Cardiac septum (tissue), 1 donor: ENCODE measurements at regions of chr12 and their contacts with region 1.

Region 1: GRCh38 chr12:32794281-32794680 is 38.6 kb upstream of the YARS2 start:
- DNase-seq: no peak

Region 2: GRCh38 chr12:32603858-32604257 is 190.4 kb before region 1 on chr12:
- intact Hi-C with region 1: no loop called
- DNase-seq: no peak

Region 3: DNA sequence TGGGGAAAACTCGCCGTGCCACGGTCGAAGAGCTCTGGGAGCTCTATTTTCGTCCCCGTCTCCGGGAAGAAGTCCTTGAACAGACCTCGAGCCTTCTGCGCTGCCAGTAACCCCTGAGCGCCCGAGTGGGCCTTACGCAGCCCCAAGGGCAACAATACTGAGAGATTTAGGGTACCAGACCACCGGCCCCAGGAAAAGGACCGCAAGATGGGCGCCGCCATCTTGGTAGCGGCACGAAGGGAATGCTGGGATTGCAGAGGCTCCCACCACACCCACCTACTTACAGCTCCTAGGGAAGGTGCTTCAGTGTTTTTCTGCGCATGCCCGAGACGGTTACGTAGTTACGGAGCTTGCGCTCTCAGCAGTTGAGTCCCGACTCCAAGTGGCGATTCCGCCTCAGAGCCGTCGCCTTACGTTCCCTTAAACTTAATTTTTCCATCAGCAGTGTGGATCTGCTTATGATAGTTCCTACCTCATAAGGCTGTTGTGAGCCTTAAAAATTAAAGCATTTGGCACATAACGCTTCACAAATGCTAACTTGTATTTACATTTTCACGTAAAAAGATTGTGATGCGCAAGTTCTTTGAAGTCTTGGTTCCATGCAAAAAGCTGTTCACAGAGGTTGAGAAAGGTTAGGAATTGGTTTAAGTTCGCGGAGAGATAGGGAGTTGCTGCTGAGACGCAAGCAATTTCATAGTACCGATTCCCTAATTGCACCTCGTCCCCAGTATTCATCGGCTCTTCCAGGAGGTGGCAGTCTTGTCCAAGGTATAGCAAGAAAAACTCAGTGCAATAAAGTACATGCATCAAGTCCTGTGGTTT is 38.4 kb before region 1 on chr12 and contains the start of gene YARS2:
- intact Hi-C with region 1: no loop called
- DNase-seq: peak; percentile 96
- total RNA-seq, gene YARS2: 11.6 TPM

Region 4: GRCh38 chr12:32918890-32919801 is 124.9 kb after region 1 on chr12:
- intact Hi-C with region 1: loop called (anchors 10 kb)
- DNase-seq: no peak